Transverse colon (tissue), 4 donors: ENCODE measurements at regions of chr9 and their contacts with region 1.

Region 1: GRCh38 chr9:27310582-27310981 is 13.6 kb upstream of the EQTN start:
- DNase-seq: no peak
- H3K4me3 ChIP-seq: no peak overlapping the region
- H3K27ac ChIP-seq: no peak overlapping the region
- H3K4me1 ChIP-seq: no peaks in the 10 kb centered on the region
- H3K27me3 ChIP-seq: no peaks in the 10 kb centered on the region
- CTCF ChIP-seq: no peak
- EP300 ChIP-seq: no peak
- POLR2A ChIP-seq: no peak

Region 2: DNA sequence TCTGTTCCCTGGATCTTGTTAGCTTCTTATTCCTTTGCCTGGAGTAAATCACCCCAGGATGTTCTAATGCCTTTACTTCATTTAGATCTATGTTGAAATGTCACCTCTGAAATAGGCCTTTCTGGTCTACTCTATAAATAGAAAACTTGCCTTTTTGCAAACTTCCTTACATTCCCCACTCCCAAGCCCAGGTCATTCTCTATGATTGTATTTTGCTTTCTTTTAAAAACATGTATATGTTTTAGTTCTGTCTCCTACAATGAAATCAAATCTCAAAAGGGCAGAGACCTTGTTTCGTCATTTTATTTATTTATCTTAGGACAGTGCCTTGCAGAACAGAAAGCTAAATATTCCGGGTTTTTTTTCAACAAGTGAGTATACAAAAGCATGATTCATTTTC is 1920.3 kb after region 1 on chr9:
- in situ Hi-C with region 1: no loop called
- intact Hi-C with region 1: loop called (anchors 5 kb)
- DNase-seq: no peak
- H3K4me3 ChIP-seq: no peak overlapping the region
- H3K27ac ChIP-seq: no peak overlapping the region
- H3K4me1 ChIP-seq: no peaks in the 10 kb centered on the region
- H3K27me3 ChIP-seq: no peaks in the 10 kb centered on the region
- CTCF ChIP-seq: no peak
- EP300 ChIP-seq: no peak
- POLR2A ChIP-seq: no peak